ENCODE measurements at regions of chr1 and their contacts with region 1.

Region 1: DNA sequence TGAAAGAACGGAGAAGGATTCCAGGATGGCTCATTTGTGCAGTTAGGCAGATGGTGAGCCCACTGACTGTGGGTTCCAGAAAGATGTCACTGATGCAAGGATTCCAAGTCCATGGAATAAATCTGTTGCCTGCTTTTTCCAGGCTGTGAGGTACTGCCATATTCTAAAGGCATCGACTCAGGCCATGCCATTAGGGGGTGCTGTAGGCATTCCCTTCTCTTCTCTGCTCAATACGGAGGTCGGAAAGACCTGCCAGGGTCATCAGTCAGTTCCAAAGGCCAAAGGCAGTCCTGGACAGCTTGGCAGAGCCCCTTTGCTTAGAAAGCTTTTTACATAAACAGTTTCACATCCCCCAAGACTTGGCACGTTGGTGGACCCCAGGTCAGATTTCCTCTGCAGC is 31.7 kb upstream of the TMEM125 start:
- DNase-seq: no peak
- ATAC-seq: no peak
- H3K4me3 Mint-ChIP-seq: peak overlapping the region; percentile 15
- H3K27ac Mint-ChIP-seq: peak overlapping the region; percentile 63
- H3K4me1 Mint-ChIP-seq: peaks cover 38% of the 10 kb centered on the region
- H3K27me3 Mint-ChIP-seq: no peaks in the 10 kb centered on the region
- CTCF ChIP-seq: no peak

Region 2: DNA sequence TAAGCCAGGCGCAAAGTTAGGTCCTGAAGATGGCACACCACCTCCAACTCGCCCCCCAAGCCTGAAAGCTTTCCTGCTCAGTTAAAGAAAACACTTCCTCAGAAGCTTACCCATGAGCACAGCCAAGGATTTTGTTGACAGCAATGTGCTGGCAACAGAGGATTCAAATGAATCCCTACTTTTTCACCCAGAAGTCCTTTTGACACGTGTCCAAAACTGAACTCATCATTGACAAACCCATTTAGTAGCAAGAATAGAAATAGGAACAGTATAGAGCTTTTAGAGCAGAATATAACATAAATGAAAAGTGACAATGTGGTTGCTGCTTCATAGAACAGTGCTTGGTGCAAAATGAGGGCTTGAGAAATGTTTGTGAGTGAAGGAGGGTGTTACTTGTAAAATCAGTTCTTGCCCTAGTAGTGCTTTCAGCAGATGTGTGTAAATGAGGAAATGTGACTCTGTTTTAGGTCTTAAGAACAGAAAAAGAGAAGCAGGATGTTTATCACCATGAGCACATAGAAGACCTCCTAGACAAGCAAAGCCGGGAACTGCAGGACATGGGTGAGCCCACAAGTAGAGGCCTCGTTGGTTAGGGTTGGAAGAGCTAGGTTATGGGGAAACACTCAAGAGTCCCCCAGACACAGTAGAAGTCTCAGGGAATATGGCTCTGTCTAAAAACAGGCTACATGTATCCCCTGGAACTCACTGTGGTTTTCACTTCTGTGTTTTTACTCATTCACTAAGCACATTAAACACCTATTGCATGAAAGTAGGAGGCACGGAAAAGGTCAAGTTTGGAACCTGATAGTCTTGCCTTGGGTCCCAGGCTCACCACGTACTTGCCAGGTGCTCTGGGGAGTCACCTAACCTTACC is 16.9 kb before region 1 on chr1:
- CTCF ChIA-PET with region 1: interaction called, 6 read pairs
- POLR2A ChIA-PET with region 1: no interaction called
- intact Hi-C with region 1: loop called (anchors 2 kb)
- DNase-seq: peak; percentile 30
- ATAC-seq: peak; percentile 86
- H3K4me3 Mint-ChIP-seq: peak overlapping the region; percentile 29
- H3K27ac Mint-ChIP-seq: peak overlapping the region; percentile 91
- H3K4me1 Mint-ChIP-seq: peaks cover 33% of the 10 kb centered on the region
- H3K27me3 Mint-ChIP-seq: no peaks in the 10 kb centered on the region
- CTCF ChIP-seq: no peak

Region 3: DNA sequence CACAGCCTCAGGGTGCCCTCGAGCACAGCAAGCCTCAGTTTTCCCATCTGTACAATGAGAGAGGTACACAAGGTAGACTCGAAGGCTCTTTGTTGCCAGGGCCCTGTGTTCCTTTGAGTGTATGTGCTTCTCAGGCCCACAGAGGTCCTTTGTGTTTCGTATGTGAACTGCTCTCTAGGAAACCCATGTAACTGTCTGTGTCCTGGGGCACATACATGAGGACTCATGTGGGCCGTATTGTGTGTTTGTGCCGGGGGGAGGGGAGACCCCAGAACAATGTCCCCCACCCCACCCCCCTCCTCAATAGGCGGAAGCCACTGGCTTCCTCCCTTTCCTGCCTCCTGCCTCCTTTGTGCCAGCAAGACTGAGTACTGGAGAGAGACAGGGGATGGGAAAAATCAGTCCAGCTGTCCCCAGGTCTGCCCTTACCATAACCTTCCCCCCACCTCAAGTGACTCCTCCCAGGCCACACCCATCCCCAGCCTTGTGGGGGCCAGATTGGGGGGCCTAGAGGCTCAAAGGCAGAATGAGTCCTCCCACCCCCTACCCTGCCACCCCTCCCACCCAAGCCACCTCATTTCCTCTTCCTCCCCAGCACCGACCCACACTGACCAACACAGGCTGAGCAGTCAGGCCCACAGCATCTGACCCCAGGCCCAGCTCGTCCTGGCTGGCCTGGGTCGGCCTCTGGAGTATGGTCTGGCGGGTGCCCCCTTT is 62.5 kb after region 1 on chr1 and contains the start of gene TIE1:
- CTCF ChIA-PET with region 1: no interaction called
- POLR2A ChIA-PET with region 1: no interaction called
- intact Hi-C with region 1: no loop called
- DNase-seq: no peak
- ATAC-seq: no peak
- H3K4me3 Mint-ChIP-seq: no peak within 1 kb of the TSS
- H3K27ac Mint-ChIP-seq: no peak within 1 kb of the TSS
- H3K4me1 Mint-ChIP-seq: no peaks in the 10 kb centered on the region
- H3K27me3 Mint-ChIP-seq: no peaks in the 10 kb centered on the region
- CTCF ChIP-seq: no peak
- total RNA-seq, gene TIE1: not detected in 2 replicates

Region 4: GRCh38 chr1:43358746-43359693 is 120.9 kb after region 1 on chr1 and contains the start of gene CDC20:
- CTCF ChIA-PET with region 1: interaction called, 5 read pairs
- POLR2A ChIA-PET with region 1: interaction called, 16 read pairs
- intact Hi-C with region 1: loop called (anchors 1 kb)
- DNase-seq: peak; percentile 96
- ATAC-seq: peak; percentile 99
- H3K4me3 Mint-ChIP-seq: peak within 1 kb of the TSS; percentile 91
- H3K27ac Mint-ChIP-seq: peak within 1 kb of the TSS; percentile 91
- H3K4me1 Mint-ChIP-seq: peaks cover 16% of the 10 kb centered on the region
- H3K27me3 Mint-ChIP-seq: no peaks in the 10 kb centered on the region
- CTCF ChIP-seq: no peak
- total RNA-seq, gene CDC20: 3.2 and 4.2 TPM in 2 replicates

Region 5: GRCh38 chr1:43367904-43368645 is 130.0 kb after region 1 on chr1 and contains the start of gene ELOVL1:
- CTCF ChIA-PET with region 1: interaction called, 7 read pairs
- POLR2A ChIA-PET with region 1: interaction called, 37 read pairs
- intact Hi-C with region 1: loop called (anchors 1 kb)
- DNase-seq: peak; percentile 92
- ATAC-seq: peak; percentile 87
- H3K4me3 Mint-ChIP-seq: peak within 1 kb of the TSS; percentile 93
- H3K27ac Mint-ChIP-seq: peak within 1 kb of the TSS; percentile 97
- H3K4me1 Mint-ChIP-seq: peaks cover 42% of the 10 kb centered on the region
- H3K27me3 Mint-ChIP-seq: no peaks in the 10 kb centered on the region
- CTCF ChIP-seq: no peak
- total RNA-seq, gene ELOVL1: 80.2 and 84.2 TPM in 2 replicates

Region 6: GRCh38 chr1:43389326-43390313 is 151.5 kb after region 1 on chr1 and contains the starts of genes MED8 and SZT2:
- CTCF ChIA-PET with region 1: interaction called, 4 read pairs
- POLR2A ChIA-PET with region 1: interaction called, 5 read pairs
- intact Hi-C with region 1: loop called (anchors 1 kb)
- DNase-seq: peak; percentile 90
- ATAC-seq: peak; percentile 91
- H3K4me3 Mint-ChIP-seq: peak within 1 kb of the TSS; percentile 99
- H3K27ac Mint-ChIP-seq: peak within 1 kb of the TSS; percentile 91
- H3K4me1 Mint-ChIP-seq: peaks cover 38% of the 10 kb centered on the region
- H3K27me3 Mint-ChIP-seq: no peaks in the 10 kb centered on the region
- CTCF ChIP-seq: no peak
- total RNA-seq, gene MED8: 33.8 and 37.2 TPM in 2 replicates
- total RNA-seq, gene SZT2: 108 and 139 TPM in 2 replicates

Region 7: GRCh38 chr1:43414634-43415223 is 176.6 kb after region 1 on chr1:
- CTCF ChIA-PET with region 1: interaction called, 56 read pairs
- POLR2A ChIA-PET with region 1: no interaction called
- intact Hi-C with region 1: loop called (anchors 1 kb)
- DNase-seq: peak; percentile 31
- ATAC-seq: peak; percentile 96
- H3K4me3 Mint-ChIP-seq: no peak overlapping the region
- H3K27ac Mint-ChIP-seq: no peak overlapping the region
- H3K4me1 Mint-ChIP-seq: no peaks in the 10 kb centered on the region
- H3K27me3 Mint-ChIP-seq: no peaks in the 10 kb centered on the region
- CTCF ChIP-seq: peak; percentile 19

Region 8: GRCh38 chr1:44200336-44200735 is 962.3 kb after region 1 on chr1:
- CTCF ChIA-PET with region 1: no interaction called
- POLR2A ChIA-PET with region 1: no interaction called
- intact Hi-C with region 1: no loop called
- DNase-seq: no peak
- ATAC-seq: no peak
- H3K4me3 Mint-ChIP-seq: no peak overlapping the region
- H3K27ac Mint-ChIP-seq: no peak overlapping the region
- H3K4me1 Mint-ChIP-seq: no peaks in the 10 kb centered on the region
- H3K27me3 Mint-ChIP-seq: peaks cover 4% of the 10 kb centered on the region
- CTCF ChIP-seq: no peak

Measured in activated B cell treated with CpG ODN at 0.5 μM for 24 hours (primary cell).